PC-3 (cell line): ENCODE measurements at regions of chr2 and their contacts with region 1.

Region 1: DNA sequence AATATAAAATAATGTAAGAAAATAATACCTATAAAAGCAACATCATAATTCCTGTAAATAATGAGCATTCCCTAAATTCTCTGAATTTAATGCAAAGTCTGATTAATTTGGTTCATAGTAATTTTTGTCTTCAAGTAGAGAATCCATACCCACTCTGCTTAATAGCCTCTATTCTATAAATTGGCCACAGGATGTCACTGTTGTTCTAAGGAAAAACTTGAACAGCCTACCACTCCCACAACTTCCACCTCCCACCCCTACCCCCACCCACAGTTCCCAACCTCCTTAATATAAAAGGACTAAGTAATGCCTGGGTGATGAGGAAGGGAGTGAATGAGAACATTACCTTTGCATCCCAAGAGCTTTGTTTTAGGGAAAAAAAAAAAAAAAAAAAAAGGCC is 27.2 kb upstream of the BBS5 start:
- DNase-seq: peak; percentile 63
- ATAC-seq: peak; percentile 86
- H3K4me3 ChIP-seq: no peak overlapping the region
- H3K27ac ChIP-seq: no peak overlapping the region
- H3K4me1 ChIP-seq: no peaks in the 10 kb centered on the region
- H3K27me3 ChIP-seq: no peaks in the 10 kb centered on the region
- CTCF ChIP-seq: peak; percentile 71

Region 2: GRCh38 chr2:169393068-169393641 is 58.9 kb before region 1 on chr2:
- CTCF ChIA-PET with region 1: no interaction called
- POLR2A ChIA-PET with region 1: no interaction called
- intact Hi-C with region 1: no loop called
- DNase-seq: no peak
- ATAC-seq: no peak
- H3K4me3 ChIP-seq: no peak overlapping the region
- H3K27ac ChIP-seq: no peak overlapping the region
- H3K4me1 ChIP-seq: no peaks in the 10 kb centered on the region
- H3K27me3 ChIP-seq: peaks cover 84% of the 10 kb centered on the region
- CTCF ChIP-seq: no peak

Region 3: GRCh38 chr2:169464466-169464865 is 12.4 kb after region 1 on chr2:
- CTCF ChIA-PET with region 1: interaction called, 3 read pairs
- POLR2A ChIA-PET with region 1: interaction called, 10 read pairs
- intact Hi-C with region 1: no loop called
- DNase-seq: no peak
- ATAC-seq: peak; percentile 52
- H3K4me3 ChIP-seq: no peak overlapping the region
- H3K27ac ChIP-seq: no peak overlapping the region
- H3K4me1 ChIP-seq: peaks cover 13% of the 10 kb centered on the region
- H3K27me3 ChIP-seq: no peaks in the 10 kb centered on the region
- CTCF ChIP-seq: no peak

Region 4: GRCh38 chr2:169705927-169706326 is 253.8 kb after region 1 on chr2:
- CTCF ChIA-PET with region 1: no interaction called
- POLR2A ChIA-PET with region 1: no interaction called
- intact Hi-C with region 1: no loop called
- DNase-seq: no peak
- ATAC-seq: no peak
- H3K4me3 ChIP-seq: no peak overlapping the region
- H3K27ac ChIP-seq: no peak overlapping the region
- H3K4me1 ChIP-seq: no peaks in the 10 kb centered on the region
- H3K27me3 ChIP-seq: no peaks in the 10 kb centered on the region
- CTCF ChIP-seq: no peak

Region 5: DNA sequence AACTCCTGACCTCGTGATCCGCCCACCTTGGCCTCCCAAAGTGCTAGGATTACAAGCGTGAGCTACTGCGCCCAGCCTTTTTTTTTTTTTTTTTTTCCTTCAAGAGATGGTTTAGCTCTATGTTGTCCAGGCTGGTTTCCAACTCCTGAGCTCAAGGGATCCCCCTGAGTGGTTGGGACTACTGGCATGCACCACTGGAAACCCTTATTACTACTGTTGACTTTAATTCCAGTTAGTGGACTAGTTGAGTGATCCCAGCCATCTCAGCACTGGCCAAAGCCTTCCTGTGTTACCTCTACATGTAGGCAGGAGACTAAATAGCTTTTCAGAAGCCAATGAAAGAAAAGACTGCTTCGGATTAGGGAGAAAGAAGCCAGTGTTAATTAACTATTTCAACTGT is 338.5 kb after region 1 on chr2:
- CTCF ChIA-PET with region 1: no interaction called
- POLR2A ChIA-PET with region 1: no interaction called
- intact Hi-C with region 1: loop called (anchors 5 kb)
- DNase-seq: no peak
- ATAC-seq: no peak
- H3K4me3 ChIP-seq: no peak overlapping the region
- H3K27ac ChIP-seq: no peak overlapping the region
- H3K4me1 ChIP-seq: peaks cover 6% of the 10 kb centered on the region; the same call in 1 of the 2 replicates
- H3K27me3 ChIP-seq: no peaks in the 10 kb centered on the region
- CTCF ChIP-seq: no peak

Region 6: DNA sequence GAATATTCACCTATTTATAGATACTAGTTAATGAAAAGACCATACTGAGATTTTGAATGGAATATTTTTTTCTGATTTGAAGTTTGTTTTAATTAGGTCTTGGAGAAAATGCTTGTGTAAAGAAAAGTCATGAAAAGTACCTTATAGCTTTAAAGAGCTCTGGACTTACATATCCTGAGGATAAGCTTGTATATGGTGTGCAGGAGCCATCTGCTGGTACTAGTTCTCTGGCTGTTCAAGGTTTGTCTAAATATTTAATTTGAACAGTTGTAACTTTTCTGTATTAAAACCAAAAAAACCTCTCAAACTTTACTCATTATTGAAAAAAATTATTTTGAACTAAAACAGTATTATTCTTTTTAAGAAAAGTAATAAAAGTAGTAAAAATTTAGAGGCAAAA is 425.3 kb after region 1 on chr2:
- CTCF ChIA-PET with region 1: no interaction called
- POLR2A ChIA-PET with region 1: no interaction called
- intact Hi-C with region 1: loop called (anchors 1 kb)
- DNase-seq: peak; percentile 33
- ATAC-seq: peak; percentile 45; the same call in 1 of the 2 replicates
- H3K4me3 ChIP-seq: no peak overlapping the region
- H3K27ac ChIP-seq: no peak overlapping the region
- H3K4me1 ChIP-seq: no peaks in the 10 kb centered on the region
- H3K27me3 ChIP-seq: no peaks in the 10 kb centered on the region
- CTCF ChIP-seq: peak; percentile 50

Region 7: DNA sequence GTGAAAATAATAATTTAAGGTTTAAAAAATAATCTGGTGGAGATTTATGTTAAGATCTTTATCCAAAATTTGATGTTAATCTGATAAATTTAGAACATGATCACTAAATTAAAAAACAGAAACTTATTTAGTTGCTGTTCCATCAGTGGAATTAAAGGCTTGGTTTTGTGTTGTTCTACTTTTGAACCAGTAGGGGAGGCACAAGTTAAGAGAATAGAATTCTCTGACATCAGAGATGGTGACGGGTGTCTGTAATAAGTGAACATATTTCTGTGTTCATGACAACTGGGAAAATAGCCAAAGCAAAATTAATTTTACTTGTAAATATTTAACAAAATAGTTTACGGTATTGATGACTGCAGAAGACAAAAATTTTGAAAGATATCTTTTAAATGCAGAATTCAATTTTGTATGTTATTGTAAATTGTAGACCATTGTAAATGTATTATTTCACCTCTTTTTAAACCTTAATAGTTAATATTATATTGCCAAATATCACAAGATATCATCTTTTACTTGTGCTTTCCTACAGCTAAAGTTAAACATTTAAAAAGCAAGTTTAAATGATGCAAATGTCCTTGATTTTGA is 481.1 kb after region 1 on chr2:
- CTCF ChIA-PET with region 1: interaction called, 3 read pairs
- POLR2A ChIA-PET with region 1: no interaction called
- intact Hi-C with region 1: loop called (anchors 1 kb)
- DNase-seq: peak; percentile 70
- ATAC-seq: peak; percentile 37; the same call in 1 of the 2 replicates
- H3K4me3 ChIP-seq: no peak overlapping the region
- H3K27ac ChIP-seq: no peak overlapping the region
- H3K4me1 ChIP-seq: no peaks in the 10 kb centered on the region
- H3K27me3 ChIP-seq: no peaks in the 10 kb centered on the region
- CTCF ChIP-seq: peak; percentile 77

Region 8: DNA sequence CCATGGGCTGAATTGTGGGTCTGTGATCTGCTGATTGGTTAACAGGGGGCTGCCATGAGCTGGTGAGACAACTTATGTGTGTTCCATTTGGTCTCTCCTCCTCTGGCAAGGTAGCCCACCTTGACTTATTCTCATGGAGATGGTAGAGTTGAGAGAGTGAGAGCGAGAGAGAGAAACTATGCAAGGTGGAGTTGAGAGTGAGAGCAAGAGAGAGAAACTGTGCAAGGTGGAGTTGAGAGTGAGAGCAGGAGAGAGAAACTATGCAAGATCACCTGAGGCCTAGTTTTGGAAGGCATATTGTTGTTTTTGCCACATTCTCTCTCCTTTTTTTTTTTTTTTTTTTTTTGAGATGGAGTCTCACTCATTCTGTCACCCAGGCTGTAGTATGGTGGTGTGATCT is 530.8 kb after region 1 on chr2:
- CTCF ChIA-PET with region 1: interaction called, 13 read pairs
- POLR2A ChIA-PET with region 1: no interaction called
- intact Hi-C with region 1: no loop called
- DNase-seq: no peak
- ATAC-seq: no peak
- H3K4me3 ChIP-seq: no peak overlapping the region
- H3K27ac ChIP-seq: no peak overlapping the region
- H3K4me1 ChIP-seq: no peaks in the 10 kb centered on the region
- H3K27me3 ChIP-seq: no peaks in the 10 kb centered on the region
- CTCF ChIP-seq: no peak